ENCODE measurements at regions of chr1 and their contacts with region 1.

Region 1: DNA sequence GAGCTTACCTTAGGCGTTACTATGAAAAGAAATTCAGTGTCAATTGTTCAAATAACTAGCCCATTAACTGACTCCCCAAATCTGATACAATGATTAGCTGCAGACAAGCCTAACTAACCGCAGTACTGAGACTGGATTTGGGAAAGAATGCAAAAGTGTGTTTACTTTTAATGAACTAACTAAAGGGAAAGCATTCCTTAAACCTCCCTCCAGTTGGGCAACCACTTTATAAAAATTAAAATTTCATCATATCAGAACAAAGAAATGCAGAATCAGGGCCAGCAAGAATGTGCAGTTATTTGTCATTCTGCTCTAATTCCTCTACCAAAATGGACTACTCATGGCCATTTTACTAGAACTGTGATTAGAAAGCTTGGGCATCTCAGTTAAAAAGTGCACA is 11.7 kb upstream of the NR5A2 start:
- DNase-seq: no peak
- ATAC-seq: no peak; the same call in 1 of the 2 replicates
- H3K4me3 ChIP-seq: no peak overlapping the region
- H3K27ac ChIP-seq: no peak overlapping the region
- H3K4me1 ChIP-seq: no peaks in the 10 kb centered on the region
- H3K27me3 ChIP-seq: peaks cover 3% of the 10 kb centered on the region
- CTCF ChIP-seq: no peak
- POLR2A ChIP-seq: no peak
- RAD21 ChIP-seq: no peak

Region 2: DNA sequence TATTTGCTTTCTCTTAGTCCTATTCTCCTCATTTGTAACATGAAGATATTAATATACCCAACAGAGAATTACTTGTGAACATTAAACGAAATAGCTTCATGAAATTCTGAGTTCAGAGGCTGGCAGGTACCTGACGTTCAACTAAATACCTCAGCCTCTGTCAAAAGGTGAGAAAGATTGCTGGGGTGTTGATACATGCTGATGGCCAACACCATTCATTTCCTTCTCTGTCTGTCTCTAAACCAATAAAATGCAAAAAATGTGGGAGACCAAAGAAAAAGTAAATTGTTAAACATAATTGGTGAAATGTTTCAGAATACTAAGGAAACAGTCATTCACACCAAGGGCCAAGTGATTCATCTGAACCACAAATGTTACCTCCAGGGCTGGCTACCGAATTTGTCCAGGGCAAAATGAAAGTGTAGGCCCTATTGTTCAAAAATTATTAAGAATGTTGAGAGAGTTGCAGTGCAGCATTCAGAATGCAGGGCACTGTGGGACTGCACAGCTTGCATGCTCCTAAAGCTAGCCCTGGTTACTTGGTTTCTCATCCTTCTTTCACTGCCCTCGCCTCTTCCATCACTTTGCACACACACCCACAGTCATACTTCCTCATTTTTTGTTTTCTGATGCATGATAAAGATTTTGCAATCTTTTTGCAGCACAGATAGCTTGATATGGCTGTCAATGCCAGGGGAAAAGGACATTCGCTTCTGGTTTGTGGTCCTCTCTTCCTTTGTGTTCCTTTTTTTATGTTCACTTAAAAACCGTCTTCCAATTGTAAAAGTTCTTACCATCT is 402.6 kb before region 1 on chr1:
- CTCF ChIA-PET with region 1: no interaction called
- POLR2A ChIA-PET with region 1: interaction called, 17 read pairs
- dilution Hi-C with region 1: no loop called
- in situ Hi-C with region 1: no loop called
- intact Hi-C with region 1: no loop called
- DNase-seq: peak; percentile 1
- ATAC-seq: peak; percentile 32; the same call in 1 of the 2 replicates
- H3K4me3 ChIP-seq: no peak overlapping the region
- H3K27ac ChIP-seq: no peak overlapping the region
- H3K4me1 ChIP-seq: no peaks in the 10 kb centered on the region
- H3K27me3 ChIP-seq: peaks cover 10% of the 10 kb centered on the region
- CTCF ChIP-seq: no peak
- POLR2A ChIP-seq: no peak
- RAD21 ChIP-seq: no peak